ENCODE measurements at regions of chr17 and their contacts with region 1.

Region 1: GRCh38 chr17:70295731-70296130 is 126.4 kb downstream of the KCNJ2 start:
- DNase-seq: peak; percentile 36 to 74 (median 51)
- H3K4me3 ChIP-seq: peak overlapping the region in 1 of 3 experiments; percentile 46
- H3K4me3 Mint-ChIP-seq: peak overlapping the region in 1 of 2 donors; percentile 32
- H3K27ac ChIP-seq: peak overlapping the region; percentile 25 to 73
- H3K27ac Mint-ChIP-seq: peak overlapping the region; percentile 66 to 95 (median 87)
- H3K4me1 ChIP-seq: peaks cover 35 to 48% of the 10 kb centered on the region in 2 donors
- H3K4me1 Mint-ChIP-seq: peaks cover 47% of the 10 kb centered on the region
- H3K27me3 ChIP-seq: no peaks in the 10 kb centered on the region
- H3K27me3 Mint-ChIP-seq: no peaks in the 10 kb centered on the region
- CTCF ChIP-seq: no peak

Region 2: GRCh38 chr17:70168977-70169708 is 126.6 kb before region 1 on chr17 and contains the start of gene KCNJ2:
- intact Hi-C with region 1: loop called in 1 of 2 experiments (anchors 2 kb)
- DNase-seq: peak; percentile 87 to 93 (median 89)
- H3K4me3 ChIP-seq: peak within 1 kb of the TSS; percentile 88 to 97 (median 89)
- H3K4me3 Mint-ChIP-seq: peak within 1 kb of the TSS; percentile 96 to 100
- H3K27ac ChIP-seq: peak within 1 kb of the TSS; percentile 71 to 87
- H3K27ac Mint-ChIP-seq: peak within 1 kb of the TSS; percentile 89 to 96 (median 93)
- H3K4me1 ChIP-seq: peaks cover 34 to 55% of the 10 kb centered on the region in 2 donors
- H3K4me1 Mint-ChIP-seq: peaks cover 58% of the 10 kb centered on the region
- H3K27me3 ChIP-seq: no peaks in the 10 kb centered on the region
- H3K27me3 Mint-ChIP-seq: peaks cover 0 to 2% (median 0%) of the 10 kb centered on the region in 3 donors
- CTCF ChIP-seq: no peak
- polyA plus RNA-seq, gene KCNJ2: 0.37 to 2.0 (median 1.7) TPM

Region 3: DNA sequence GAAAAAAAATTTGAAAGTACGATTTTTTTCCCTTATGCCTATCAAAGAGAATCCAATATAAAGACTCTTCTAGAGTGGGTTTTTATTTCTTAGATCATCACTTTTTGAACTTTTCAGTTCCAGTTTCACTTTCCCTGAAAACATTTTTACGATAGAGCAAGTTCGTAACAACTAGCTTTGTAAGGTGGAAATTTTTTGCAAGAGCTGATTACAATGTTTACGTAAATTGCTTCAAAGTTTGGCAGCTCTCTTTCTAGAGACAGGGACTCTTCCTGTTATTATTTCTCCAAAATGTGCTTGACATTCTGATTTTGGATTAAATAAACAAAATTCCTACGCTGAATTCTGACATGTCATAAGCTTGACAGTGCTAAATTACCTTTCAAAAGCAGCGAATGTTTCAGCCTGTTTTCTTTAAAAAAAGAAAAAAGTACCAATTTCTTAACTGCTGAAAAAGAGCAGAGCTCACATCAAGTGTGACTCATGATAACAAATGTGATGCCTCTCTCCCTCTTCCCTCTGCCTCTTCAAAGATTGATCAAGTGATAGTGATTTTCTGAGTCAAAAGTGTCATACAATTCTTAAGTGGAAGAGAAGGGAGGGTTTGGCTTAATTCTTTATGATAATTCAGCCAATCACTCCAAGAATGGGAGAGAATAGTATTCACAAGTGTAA is 48.8 kb after region 1 on chr17:
- intact Hi-C with region 1: loop called in 1 of 2 experiments (anchors 10 kb)
- DNase-seq: peak; percentile 20 to 62 (median 28)
- H3K4me3 ChIP-seq: peak overlapping the region; percentile 38 to 72 (median 64)
- H3K4me3 Mint-ChIP-seq: peak overlapping the region; percentile 43 to 76
- H3K27ac ChIP-seq: peak overlapping the region in 1 of 2 donors; percentile 79
- H3K27ac Mint-ChIP-seq: peak overlapping the region; percentile 41 to 84 (median 61)
- H3K4me1 ChIP-seq: peaks cover 12 to 18% of the 10 kb centered on the region in 2 donors
- H3K4me1 Mint-ChIP-seq: peaks cover 19% of the 10 kb centered on the region
- H3K27me3 ChIP-seq: no peaks in the 10 kb centered on the region
- H3K27me3 Mint-ChIP-seq: peaks cover 0 to 5% (median 0%) of the 10 kb centered on the region in 3 donors
- CTCF ChIP-seq: no peak